ENCODE measurements at regions of chr5 and their contacts with region 1.

Region 1: GRCh38 chr5:68215208-68215897 is at the start of gene PIK3R1:
- DNase-seq: peak; percentile 94
- H3K4me3 Mint-ChIP-seq: peak within 1 kb of the TSS; percentile 92
- H3K27ac Mint-ChIP-seq: peak within 1 kb of the TSS; percentile 87
- H3K4me1 Mint-ChIP-seq: peaks cover 17% of the 10 kb centered on the region
- H3K27me3 Mint-ChIP-seq: no peaks in the 10 kb centered on the region
- CTCF ChIP-seq: no peak
- total RNA-seq, gene PIK3R1: 124 and 151 TPM in 2 replicates

Region 2: GRCh38 chr5:67246108-67246507 is 969.2 kb before region 1 on chr5:
- CTCF ChIA-PET with region 1: interaction called, 15 read pairs
- POLR2A ChIA-PET with region 1: interaction called, 129 read pairs
- intact Hi-C with region 1: loop called (anchors 1 kb)
- DNase-seq: peak; percentile 88
- H3K4me3 Mint-ChIP-seq: no peak overlapping the region
- H3K27ac Mint-ChIP-seq: no peak overlapping the region
- H3K4me1 Mint-ChIP-seq: no peaks in the 10 kb centered on the region
- H3K27me3 Mint-ChIP-seq: no peaks in the 10 kb centered on the region
- CTCF ChIP-seq: peak; percentile 54

Region 3: GRCh38 chr5:67493676-67494075 is 721.7 kb before region 1 on chr5:
- CTCF ChIA-PET with region 1: interaction called, 3 read pairs
- POLR2A ChIA-PET with region 1: interaction called, 10 read pairs
- intact Hi-C with region 1: no loop called
- DNase-seq: peak; percentile 28
- H3K4me3 Mint-ChIP-seq: no peak overlapping the region
- H3K27ac Mint-ChIP-seq: no peak overlapping the region
- H3K4me1 Mint-ChIP-seq: peaks cover 29% of the 10 kb centered on the region
- H3K27me3 Mint-ChIP-seq: no peaks in the 10 kb centered on the region
- CTCF ChIP-seq: no peak

Region 4: GRCh38 chr5:67693956-67694809 is 521.2 kb before region 1 on chr5:
- CTCF ChIA-PET with region 1: no interaction called
- POLR2A ChIA-PET with region 1: no interaction called
- intact Hi-C with region 1: no loop called
- DNase-seq: peak; percentile 1
- H3K4me3 Mint-ChIP-seq: no peak overlapping the region
- H3K27ac Mint-ChIP-seq: no peak overlapping the region
- H3K4me1 Mint-ChIP-seq: peaks cover 6% of the 10 kb centered on the region
- H3K27me3 Mint-ChIP-seq: no peaks in the 10 kb centered on the region
- CTCF ChIP-seq: no peak

Region 5: DNA sequence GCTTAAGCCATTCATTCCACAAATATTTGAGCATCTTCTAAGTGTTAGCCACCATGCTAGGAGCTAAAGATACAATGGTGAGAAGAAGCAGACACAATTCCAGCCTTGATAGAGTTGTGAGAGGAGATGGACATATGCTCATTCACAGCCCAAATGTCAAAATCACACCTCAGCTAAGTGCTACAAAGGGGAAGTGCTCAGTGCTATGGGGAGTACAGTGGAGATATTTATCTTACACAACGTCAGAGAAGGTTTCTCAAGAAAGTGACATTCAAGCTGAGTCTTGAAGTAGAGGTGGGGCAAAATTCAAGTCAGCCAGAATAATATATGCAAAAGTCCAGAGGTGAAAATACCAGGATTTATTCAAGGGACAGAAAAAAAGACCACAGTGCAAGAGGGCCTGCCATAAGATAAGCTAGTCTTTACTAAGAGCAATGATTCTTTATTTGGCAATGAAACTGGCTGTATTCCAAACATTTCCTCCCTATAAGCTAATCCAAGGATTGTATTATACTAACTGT is 327.7 kb before region 1 on chr5:
- CTCF ChIA-PET with region 1: no interaction called
- POLR2A ChIA-PET with region 1: interaction called, 15 read pairs
- intact Hi-C with region 1: no loop called
- DNase-seq: peak; percentile 29
- H3K4me3 Mint-ChIP-seq: no peak overlapping the region
- H3K27ac Mint-ChIP-seq: peak overlapping the region; percentile 2
- H3K4me1 Mint-ChIP-seq: peaks cover 10% of the 10 kb centered on the region
- H3K27me3 Mint-ChIP-seq: no peaks in the 10 kb centered on the region
- CTCF ChIP-seq: no peak

Region 6: DNA sequence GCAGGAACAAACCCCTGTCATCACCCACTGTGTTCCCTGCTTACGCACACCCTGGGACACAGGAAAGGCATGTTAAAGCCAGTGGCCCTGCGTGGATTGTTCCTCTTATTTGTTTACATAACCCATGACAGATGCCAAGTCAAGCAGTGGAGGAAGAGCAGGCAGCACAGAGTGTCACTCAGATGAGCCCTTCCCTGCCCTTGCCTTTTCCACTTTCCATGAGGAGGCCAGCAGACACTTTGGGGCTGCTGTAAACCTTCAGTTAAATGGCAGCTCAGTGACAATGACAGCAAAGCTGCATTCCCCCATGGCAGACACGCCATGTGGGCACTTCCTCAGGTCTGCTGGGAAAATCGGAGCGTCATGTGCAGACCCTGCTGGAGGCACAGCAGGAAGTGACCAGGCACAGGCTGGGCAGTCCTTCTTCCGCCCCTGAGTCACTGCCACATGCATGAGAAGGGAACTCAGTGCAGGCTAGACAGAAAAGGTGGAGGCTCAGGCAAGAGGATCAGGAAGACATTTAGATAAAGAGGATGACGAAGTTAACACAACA is 216.6 kb before region 1 on chr5:
- CTCF ChIA-PET with region 1: no interaction called
- POLR2A ChIA-PET with region 1: interaction called, 8 read pairs
- intact Hi-C with region 1: loop called (anchors 5 kb)
- DNase-seq: peak; percentile 88
- H3K4me3 Mint-ChIP-seq: peak overlapping the region; percentile 53
- H3K27ac Mint-ChIP-seq: peak overlapping the region; percentile 88
- H3K4me1 Mint-ChIP-seq: peaks cover 24% of the 10 kb centered on the region
- H3K27me3 Mint-ChIP-seq: no peaks in the 10 kb centered on the region
- CTCF ChIP-seq: no peak

Region 7: GRCh38 chr5:68196876-68197275 is 18.5 kb before region 1 on chr5:
- CTCF ChIA-PET with region 1: no interaction called
- POLR2A ChIA-PET with region 1: interaction called, 41 read pairs
- intact Hi-C with region 1: no loop called
- DNase-seq: no peak
- H3K4me3 Mint-ChIP-seq: no peak overlapping the region
- H3K27ac Mint-ChIP-seq: no peak overlapping the region
- H3K4me1 Mint-ChIP-seq: peaks cover 5% of the 10 kb centered on the region
- H3K27me3 Mint-ChIP-seq: no peaks in the 10 kb centered on the region
- CTCF ChIP-seq: no peak

Region 8: GRCh38 chr5:68261569-68262065 is 46.3 kb after region 1 on chr5:
- CTCF ChIA-PET with region 1: interaction called, 4 read pairs
- POLR2A ChIA-PET with region 1: interaction called, 29 read pairs
- intact Hi-C with region 1: no loop called
- DNase-seq: no peak
- H3K4me3 Mint-ChIP-seq: no peak overlapping the region
- H3K27ac Mint-ChIP-seq: no peak overlapping the region
- H3K4me1 Mint-ChIP-seq: peaks cover 68% of the 10 kb centered on the region
- H3K27me3 Mint-ChIP-seq: no peaks in the 10 kb centered on the region
- CTCF ChIP-seq: peak; percentile 17

Measured in MCF 10A (cell line).